PC-3 (cell line): ENCODE measurements at regions of chr12 and their contacts with region 1.

Region 1: DNA sequence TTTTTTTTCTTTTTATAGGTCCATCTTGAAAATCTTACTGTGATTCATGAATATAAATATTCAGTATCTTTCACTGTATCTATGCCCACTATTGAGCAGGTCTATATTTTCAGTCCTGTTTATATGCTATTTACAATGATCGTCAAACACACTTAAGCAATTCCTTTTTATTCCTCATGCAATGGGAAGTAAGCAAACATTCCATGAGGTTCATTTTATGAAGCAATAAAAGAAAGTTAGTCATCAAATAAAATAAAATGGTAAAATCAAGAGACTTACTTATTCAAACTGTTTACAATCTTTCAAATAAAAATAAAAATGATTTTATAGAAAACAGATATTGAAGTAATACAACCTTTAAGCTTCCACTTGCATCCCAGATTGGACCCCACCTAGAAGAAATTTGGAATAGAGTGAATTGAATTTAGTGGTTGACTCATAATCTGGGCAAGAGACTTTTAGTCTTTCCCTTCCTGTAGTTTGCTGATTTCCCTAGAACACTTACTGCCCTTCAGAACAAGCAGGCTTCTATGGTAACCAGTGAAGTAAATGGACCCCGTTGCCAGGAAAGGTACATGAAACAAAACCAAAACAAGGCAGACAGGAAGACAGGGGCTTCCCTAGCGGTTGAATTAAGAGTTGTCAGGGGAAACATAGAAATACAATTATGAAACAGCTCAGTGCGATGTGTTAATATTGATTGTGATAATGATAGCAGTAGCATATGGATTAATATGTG is 241.0 kb upstream of the ATP2B1 start:
- DNase-seq: peak; percentile 94
- ATAC-seq: peak; percentile 63
- H3K4me3 ChIP-seq: peak overlapping the region; percentile 27; the same call in 1 of the 2 replicates
- H3K27ac ChIP-seq: peak overlapping the region; percentile 96
- H3K4me1 ChIP-seq: peaks cover 58% of the 10 kb centered on the region
- H3K27me3 ChIP-seq: no peaks in the 10 kb centered on the region
- CTCF ChIP-seq: peak; percentile 60

Region 2: GRCh38 chr12:89636052-89636775 is 313.4 kb before region 1 on chr12:
- CTCF ChIA-PET with region 1: no interaction called
- POLR2A ChIA-PET with region 1: no interaction called
- intact Hi-C with region 1: loop called (anchors 2 kb)
- DNase-seq: peak; percentile 77
- ATAC-seq: peak; percentile 68
- H3K4me3 ChIP-seq: peak overlapping the region; percentile 2; the same call in 1 of the 2 replicates
- H3K27ac ChIP-seq: peak overlapping the region; percentile 72
- H3K4me1 ChIP-seq: peaks cover 49% of the 10 kb centered on the region
- H3K27me3 ChIP-seq: no peaks in the 10 kb centered on the region
- CTCF ChIP-seq: no peak

Region 3: GRCh38 chr12:89756585-89757321 is 192.9 kb before region 1 on chr12:
- CTCF ChIA-PET with region 1: no interaction called
- POLR2A ChIA-PET with region 1: no interaction called
- intact Hi-C with region 1: loop called (anchors 1 kb)
- DNase-seq: peak; percentile 98
- ATAC-seq: peak; percentile 88
- H3K4me3 ChIP-seq: no peak overlapping the region; the same call in 1 of the 2 replicates
- H3K27ac ChIP-seq: peak overlapping the region; percentile 94
- H3K4me1 ChIP-seq: peaks cover 42% of the 10 kb centered on the region
- H3K27me3 ChIP-seq: no peaks in the 10 kb centered on the region
- CTCF ChIP-seq: no peak

Region 4: GRCh38 chr12:89817501-89818226 is 132.0 kb before region 1 on chr12:
- CTCF ChIA-PET with region 1: no interaction called
- POLR2A ChIA-PET with region 1: no interaction called
- intact Hi-C with region 1: loop called (anchors 2 kb)
- DNase-seq: peak; percentile 74
- ATAC-seq: peak; percentile 84
- H3K4me3 ChIP-seq: no peak overlapping the region
- H3K27ac ChIP-seq: peak overlapping the region; percentile 81
- H3K4me1 ChIP-seq: peaks cover 33% of the 10 kb centered on the region
- H3K27me3 ChIP-seq: no peaks in the 10 kb centered on the region
- CTCF ChIP-seq: no peak

Region 5: DNA sequence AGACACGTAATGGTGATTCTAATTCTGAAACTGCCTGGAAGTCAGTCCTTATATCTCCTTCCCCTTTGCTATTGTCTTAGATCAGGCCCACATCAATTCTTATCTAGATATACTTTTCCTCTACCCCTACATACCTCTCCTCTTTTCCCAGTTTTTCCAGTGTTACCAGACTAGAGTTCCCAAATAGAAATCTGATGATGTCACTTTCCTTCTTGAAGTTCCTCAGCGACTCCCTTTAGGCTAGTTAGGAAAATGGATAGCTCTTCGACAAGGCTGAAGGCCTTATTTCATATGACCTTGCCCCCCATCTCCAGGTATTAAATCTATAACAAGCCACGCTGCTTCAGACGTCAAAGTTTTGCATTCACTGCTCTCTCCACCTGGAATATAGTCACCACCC is 39.9 kb before region 1 on chr12:
- CTCF ChIA-PET with region 1: no interaction called
- POLR2A ChIA-PET with region 1: no interaction called
- intact Hi-C with region 1: loop called (anchors 2 kb)
- DNase-seq: no peak
- ATAC-seq: no peak
- H3K4me3 ChIP-seq: no peak overlapping the region
- H3K27ac ChIP-seq: no peak overlapping the region
- H3K4me1 ChIP-seq: no peaks in the 10 kb centered on the region
- H3K27me3 ChIP-seq: no peaks in the 10 kb centered on the region
- CTCF ChIP-seq: no peak

Region 6: GRCh38 chr12:90211017-90211416 is 261.4 kb after region 1 on chr12:
- CTCF ChIA-PET with region 1: no interaction called
- POLR2A ChIA-PET with region 1: no interaction called
- intact Hi-C with region 1: loop called (anchors 1 kb)
- DNase-seq: peak; percentile 95
- ATAC-seq: peak; percentile 100
- H3K4me3 ChIP-seq: no peak overlapping the region
- H3K27ac ChIP-seq: peak overlapping the region; percentile 77
- H3K4me1 ChIP-seq: peaks cover 16% of the 10 kb centered on the region
- H3K27me3 ChIP-seq: no peaks in the 10 kb centered on the region
- CTCF ChIP-seq: no peak